ENCODE measurements at regions of chr6 and their contacts with region 1.

Region 1: DNA sequence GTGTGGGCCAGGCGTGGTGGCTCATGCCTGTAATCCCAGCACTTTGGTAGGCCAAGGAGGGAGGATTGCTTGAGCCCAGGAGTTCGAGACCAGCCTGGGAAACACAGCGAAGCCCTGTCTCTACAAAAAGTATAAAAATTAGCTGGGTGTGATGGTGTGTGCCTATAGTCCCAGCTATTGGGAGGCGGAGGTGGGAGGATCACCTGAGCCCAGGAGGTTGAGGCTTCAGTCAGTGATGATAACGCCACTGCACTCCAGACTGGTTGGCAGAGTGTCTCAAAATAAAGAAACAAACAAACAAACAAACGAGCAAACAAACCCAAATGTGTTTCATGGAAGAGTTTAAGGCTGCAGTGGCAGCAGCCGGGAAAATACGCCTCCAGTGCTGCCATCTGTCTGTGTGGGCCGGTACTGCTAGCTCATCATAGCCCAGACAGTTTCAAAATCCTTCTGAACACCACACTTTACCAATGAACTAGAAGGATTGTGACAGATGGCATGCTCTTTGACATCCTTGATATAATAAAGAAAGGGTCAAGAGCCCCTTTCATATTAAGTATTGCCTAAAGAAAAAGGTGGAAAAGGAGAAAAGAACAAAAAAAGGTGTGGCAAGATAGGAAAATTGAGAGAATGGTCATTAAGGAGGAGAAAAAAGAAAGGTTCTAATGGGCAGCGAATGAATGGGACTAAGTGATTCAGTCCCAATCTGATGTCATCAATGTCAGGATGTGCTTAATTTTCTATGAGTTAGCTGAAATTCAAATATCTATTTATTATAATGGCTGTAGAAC is 298.6 kb downstream of the SYNE1 start:
- DNase-seq: peak; percentile 63
- ATAC-seq: peak; percentile 63
- H3K4me3 ChIP-seq: no peak overlapping the region
- H3K4me3 Mint-ChIP-seq: no peak overlapping the region
- H3K27ac ChIP-seq: no peak overlapping the region
- H3K27ac Mint-ChIP-seq: no peak overlapping the region
- H3K4me1 ChIP-seq: peaks cover 0 to 3% of the 10 kb centered on the region in 2 donors
- H3K4me1 Mint-ChIP-seq: peaks cover 2% of the 10 kb centered on the region
- H3K27me3 ChIP-seq: no peaks in the 10 kb centered on the region
- H3K27me3 Mint-ChIP-seq: peaks cover 9% of the 10 kb centered on the region
- CTCF ChIP-seq: peak; percentile 96

Region 2: GRCh38 chr6:152277826-152278329 is 60.7 kb before region 1 on chr6:
- CTCF ChIA-PET with region 1: interaction called, 14 read pairs
- POLR2A ChIA-PET with region 1: no interaction called
- intact Hi-C with region 1: no loop called
- DNase-seq: no peak
- ATAC-seq: no peak
- H3K4me3 ChIP-seq: no peak overlapping the region
- H3K4me3 Mint-ChIP-seq: no peak overlapping the region
- H3K27ac ChIP-seq: no peak overlapping the region
- H3K27ac Mint-ChIP-seq: no peak overlapping the region
- H3K4me1 ChIP-seq: no peaks in the 10 kb centered on the region
- H3K4me1 Mint-ChIP-seq: no peaks in the 10 kb centered on the region
- H3K27me3 ChIP-seq: no peaks in the 10 kb centered on the region
- H3K27me3 Mint-ChIP-seq: no peaks in the 10 kb centered on the region
- CTCF ChIP-seq: no peak

Region 3: DNA sequence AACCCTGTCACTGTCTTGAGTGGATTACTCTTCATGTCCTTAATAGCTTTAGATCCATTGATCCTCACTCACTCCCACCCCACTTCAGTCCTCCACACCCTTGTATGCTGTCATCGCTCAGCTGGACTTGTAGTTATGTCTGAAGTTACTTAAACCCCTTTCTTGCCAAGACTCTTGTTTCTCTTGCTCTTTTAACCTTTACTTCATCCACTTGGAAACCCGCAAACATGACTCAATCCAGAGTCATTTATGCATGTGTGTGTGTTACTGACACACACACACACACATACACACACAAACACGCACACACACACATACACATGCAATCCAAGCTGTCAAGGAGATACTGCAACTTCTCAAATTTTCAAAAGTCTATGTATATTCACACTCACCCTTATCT is 43.2 kb before region 1 on chr6:
- CTCF ChIA-PET with region 1: interaction called, 67 read pairs
- POLR2A ChIA-PET with region 1: no interaction called
- intact Hi-C with region 1: no loop called
- DNase-seq: no peak
- ATAC-seq: no peak
- H3K4me3 ChIP-seq: no peak overlapping the region
- H3K4me3 Mint-ChIP-seq: no peak overlapping the region
- H3K27ac ChIP-seq: no peak overlapping the region
- H3K27ac Mint-ChIP-seq: no peak overlapping the region
- H3K4me1 ChIP-seq: peaks cover 12 to 17% of the 10 kb centered on the region in 2 donors
- H3K4me1 Mint-ChIP-seq: peaks cover 23% of the 10 kb centered on the region
- H3K27me3 ChIP-seq: no peaks in the 10 kb centered on the region
- H3K27me3 Mint-ChIP-seq: no peaks in the 10 kb centered on the region
- CTCF ChIP-seq: no peak

Region 4: DNA sequence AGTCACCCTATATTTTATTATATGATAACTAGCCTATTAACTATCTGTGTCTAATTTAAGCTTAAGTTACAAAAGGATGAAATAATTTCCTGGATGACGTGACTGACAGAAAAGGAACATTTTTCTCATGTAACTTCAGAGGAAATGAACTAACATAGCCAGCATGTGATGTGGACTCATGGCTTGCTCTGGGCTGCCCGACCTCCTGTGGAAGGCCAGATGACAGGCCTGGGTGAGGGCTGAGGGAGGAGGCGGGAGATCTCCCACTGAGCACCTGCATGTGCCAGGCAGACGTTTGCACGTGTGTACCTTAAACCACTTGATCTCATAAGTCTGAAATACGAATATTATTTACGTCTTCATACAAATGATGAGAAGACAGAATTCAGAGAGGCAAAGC is 22.5 kb before region 1 on chr6:
- CTCF ChIA-PET with region 1: interaction called, 21 read pairs
- POLR2A ChIA-PET with region 1: no interaction called
- intact Hi-C with region 1: no loop called
- DNase-seq: no peak
- ATAC-seq: no peak
- H3K4me3 ChIP-seq: no peak overlapping the region
- H3K4me3 Mint-ChIP-seq: no peak overlapping the region
- H3K27ac ChIP-seq: no peak overlapping the region
- H3K27ac Mint-ChIP-seq: no peak overlapping the region
- H3K4me1 ChIP-seq: peaks cover 0 to 5% of the 10 kb centered on the region in 2 donors
- H3K4me1 Mint-ChIP-seq: peaks cover 7% of the 10 kb centered on the region
- H3K27me3 ChIP-seq: no peaks in the 10 kb centered on the region
- H3K27me3 Mint-ChIP-seq: peaks cover 5% of the 10 kb centered on the region
- CTCF ChIP-seq: no peak

Region 5: DNA sequence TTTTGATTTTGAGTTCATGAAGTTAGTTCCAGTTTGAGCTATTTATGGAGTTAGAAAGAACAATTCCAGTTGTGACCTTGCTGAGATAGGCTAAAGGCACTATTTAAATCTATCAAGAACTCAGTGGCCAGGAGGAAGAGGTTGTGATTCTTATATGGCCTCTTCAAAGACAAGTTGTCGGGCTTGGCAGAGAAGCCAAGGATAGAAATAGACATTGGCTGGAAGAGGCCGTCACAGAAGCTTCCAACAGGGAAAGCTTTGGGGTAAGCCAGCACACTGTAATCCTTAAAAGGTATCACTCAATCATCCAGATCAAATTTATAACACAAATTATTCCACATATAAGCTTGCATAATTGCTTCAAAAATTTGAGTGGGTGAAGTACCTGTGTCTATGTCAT is 12.6 kb after region 1 on chr6:
- CTCF ChIA-PET with region 1: interaction called, 16 read pairs
- POLR2A ChIA-PET with region 1: no interaction called
- intact Hi-C with region 1: no loop called
- DNase-seq: no peak
- ATAC-seq: no peak
- H3K4me3 ChIP-seq: no peak overlapping the region
- H3K4me3 Mint-ChIP-seq: no peak overlapping the region
- H3K27ac ChIP-seq: no peak overlapping the region
- H3K27ac Mint-ChIP-seq: no peak overlapping the region
- H3K4me1 ChIP-seq: no peaks in the 10 kb centered on the region
- H3K4me1 Mint-ChIP-seq: no peaks in the 10 kb centered on the region
- H3K27me3 ChIP-seq: no peaks in the 10 kb centered on the region
- H3K27me3 Mint-ChIP-seq: peaks cover 3% of the 10 kb centered on the region
- CTCF ChIP-seq: no peak

Measured in B cell (primary cell).